Activated naive CD4-positive, alpha-beta T cell treated with anti-CD3 and anti-CD28 coated beads for 36 hours (primary cell): ENCODE measurements at regions of chr9 and their contacts with region 1.

Region 1: GRCh38 chr9:6703898-6704639 is 53.7 kb upstream of the KDM4C start:
- DNase-seq: peak; percentile 75
- H3K4me3 Mint-ChIP-seq: peak overlapping the region; percentile 86
- H3K27ac Mint-ChIP-seq: peak overlapping the region; percentile 83
- H3K4me1 Mint-ChIP-seq: peaks cover 7% of the 10 kb centered on the region
- H3K27me3 Mint-ChIP-seq: no peaks in the 10 kb centered on the region

Region 2: DNA sequence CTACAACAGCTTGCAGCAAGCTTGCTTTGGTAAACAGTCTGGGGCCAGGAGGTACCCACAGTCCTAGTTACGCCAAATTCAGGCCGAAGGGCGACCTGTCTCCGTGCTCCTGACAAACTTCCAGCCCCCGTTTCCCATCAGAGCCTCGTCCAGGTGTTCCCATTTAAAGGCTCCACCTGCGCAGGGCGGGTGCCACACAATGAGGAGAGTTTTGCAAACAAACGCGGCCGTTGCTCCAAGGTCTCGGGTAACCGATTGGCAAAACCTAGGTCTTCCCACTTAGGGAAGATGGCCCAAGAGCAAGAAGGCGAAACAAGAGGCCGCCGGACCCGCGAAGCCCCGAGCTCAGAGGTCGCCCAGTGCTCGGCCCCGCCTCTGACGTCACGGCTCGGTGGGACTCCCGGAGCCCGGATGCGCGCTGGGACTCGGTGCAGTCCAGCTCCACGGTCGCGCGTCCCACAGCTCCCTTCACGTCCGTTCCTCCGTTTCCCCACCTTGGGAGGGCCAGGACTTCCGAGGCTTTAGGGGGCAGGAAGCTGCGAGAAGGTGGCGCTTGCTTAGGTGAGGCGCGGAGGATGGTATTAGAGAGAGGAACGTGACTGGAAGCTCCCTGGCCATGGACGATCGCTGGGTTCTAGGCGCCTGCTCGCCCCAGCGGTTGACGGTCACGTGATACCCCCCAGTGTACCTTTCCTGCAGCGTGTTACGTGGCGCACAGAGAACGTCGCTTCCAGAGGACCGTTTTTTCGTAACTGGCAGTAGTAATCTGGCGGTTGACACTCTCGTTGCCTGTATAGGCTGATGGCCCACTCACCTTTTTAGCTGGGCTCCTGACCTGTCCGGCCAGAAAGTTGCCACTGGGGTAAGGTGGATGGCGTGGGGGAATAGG is 11.9 kb after region 1 on chr9:
- CTCF ChIA-PET with region 1: no interaction called
- intact Hi-C with region 1: loop called (anchors 1 kb)
- DNase-seq: peak; percentile 80
- H3K4me3 Mint-ChIP-seq: peak overlapping the region; percentile 79
- H3K27ac Mint-ChIP-seq: peak overlapping the region; percentile 71
- H3K4me1 Mint-ChIP-seq: peaks cover 6% of the 10 kb centered on the region
- H3K27me3 Mint-ChIP-seq: no peaks in the 10 kb centered on the region